ENCODE measurements at regions of chr22 and their contacts with region 1.

Region 1: GRCh38 chr22:31089160-31090100 is 8.3 kb downstream of the SMTN start:
- DNase-seq: peak; percentile 44 to 62
- ATAC-seq: peak; percentile 17 to 22
- H3K4me3 ChIP-seq: no peak overlapping the region
- H3K27ac ChIP-seq: peak overlapping the region; percentile 20 to 63 (median 54)
- H3K4me1 ChIP-seq: peaks cover 35 to 39% of the 10 kb centered on the region in 2 donors
- H3K27me3 ChIP-seq: no peaks in the 10 kb centered on the region
- CTCF ChIP-seq: peak; percentile 90 to 94 (median 93)
- POLR2A ChIP-seq: no peak

Region 2: GRCh38 chr22:31046539-31047226 is 42.7 kb before region 1 on chr22:
- in situ Hi-C with region 1: no loop called
- intact Hi-C with region 1: no loop called
- DNase-seq: peak; percentile 30 to 46
- ATAC-seq: peak; percentile 75 to 85
- H3K4me3 ChIP-seq: no peak overlapping the region
- H3K27ac ChIP-seq: peak overlapping the region; percentile 60 to 83 (median 70)
- H3K4me1 ChIP-seq: peaks cover 14 to 22% of the 10 kb centered on the region in 2 donors
- H3K27me3 ChIP-seq: no peaks in the 10 kb centered on the region
- CTCF ChIP-seq: no peak
- POLR2A ChIP-seq: no peak

Region 3: GRCh38 chr22:31107178-31107893 is 17.9 kb after region 1 on chr22 and contains the start of gene SELENOM:
- in situ Hi-C with region 1: no loop called
- intact Hi-C with region 1: loop called (anchors 1 kb)
- DNase-seq: peak; percentile 96 to 97
- ATAC-seq: peak; percentile 92 to 94
- H3K4me3 ChIP-seq: peak within 1 kb of the TSS; percentile 68 to 81 (median 80)
- H3K27ac ChIP-seq: peak within 1 kb of the TSS; percentile 93 to 98 (median 96)
- H3K4me1 ChIP-seq: peaks cover 22 to 30% of the 10 kb centered on the region in 2 donors
- H3K27me3 ChIP-seq: no peaks in the 10 kb centered on the region
- CTCF ChIP-seq: peak; percentile 89 to 97 (median 94)
- POLR2A ChIP-seq: peak; percentile 85 to 87
- total RNA-seq, gene SELENOM: 144 to 184 (median 157) TPM

Region 4: GRCh38 chr22:31394326-31394725 is 304.9 kb after region 1 on chr22:
- in situ Hi-C with region 1: no loop called
- intact Hi-C with region 1: no loop called
- DNase-seq: no peak
- ATAC-seq: no peak
- H3K4me3 ChIP-seq: no peak overlapping the region
- H3K27ac ChIP-seq: no peak overlapping the region
- H3K4me1 ChIP-seq: peaks cover 5 to 7% of the 10 kb centered on the region in 2 donors
- H3K27me3 ChIP-seq: no peaks in the 10 kb centered on the region
- CTCF ChIP-seq: no peak
- POLR2A ChIP-seq: no peak

Measured in gastrocnemius medialis (tissue), 4 donors.